Adrenal gland (tissue), 19 donors: ENCODE measurements at regions of chr11 and their contacts with region 1.

Region 1: DNA sequence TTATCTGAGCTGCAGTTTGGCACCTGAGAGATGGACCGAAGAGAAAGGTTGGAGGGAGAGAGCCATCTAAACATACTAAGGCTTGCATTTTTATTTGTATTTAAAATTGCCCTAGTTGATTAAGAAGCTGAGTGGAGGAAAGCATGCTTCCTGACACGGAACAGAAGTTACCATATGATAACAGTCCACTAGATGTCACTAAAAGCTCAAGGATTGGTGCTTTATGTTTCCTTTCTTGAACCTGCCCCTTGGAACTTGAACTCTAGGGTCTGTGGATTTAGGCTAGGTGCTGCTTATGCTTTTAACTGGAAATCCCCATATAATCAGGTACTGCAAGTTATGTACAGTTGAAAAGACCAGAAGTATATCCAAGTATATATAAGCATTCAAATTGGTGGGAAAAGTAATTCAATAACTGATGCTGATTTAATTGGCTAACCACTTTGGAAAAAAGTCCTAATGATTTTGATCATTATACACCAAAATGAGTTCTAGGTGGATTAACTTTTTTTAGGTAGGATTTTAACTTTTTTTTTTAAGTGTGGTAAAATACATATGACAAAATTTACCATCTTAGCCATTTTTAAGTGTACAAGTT is 9.5 kb downstream of the RBMXL2 start:
- DNase-seq: peak in 1 of 7 donors; percentile 2
- H3K4me3 ChIP-seq: no peak overlapping the region
- H3K27ac ChIP-seq: no peak overlapping the region
- H3K4me1 ChIP-seq: no peaks in the 10 kb centered on the region
- H3K27me3 ChIP-seq: no peaks in the 10 kb centered on the region
- CTCF ChIP-seq: peak; percentile 41 to 78 (median 74)
- POLR2A ChIP-seq: no peak

Region 2: DNA sequence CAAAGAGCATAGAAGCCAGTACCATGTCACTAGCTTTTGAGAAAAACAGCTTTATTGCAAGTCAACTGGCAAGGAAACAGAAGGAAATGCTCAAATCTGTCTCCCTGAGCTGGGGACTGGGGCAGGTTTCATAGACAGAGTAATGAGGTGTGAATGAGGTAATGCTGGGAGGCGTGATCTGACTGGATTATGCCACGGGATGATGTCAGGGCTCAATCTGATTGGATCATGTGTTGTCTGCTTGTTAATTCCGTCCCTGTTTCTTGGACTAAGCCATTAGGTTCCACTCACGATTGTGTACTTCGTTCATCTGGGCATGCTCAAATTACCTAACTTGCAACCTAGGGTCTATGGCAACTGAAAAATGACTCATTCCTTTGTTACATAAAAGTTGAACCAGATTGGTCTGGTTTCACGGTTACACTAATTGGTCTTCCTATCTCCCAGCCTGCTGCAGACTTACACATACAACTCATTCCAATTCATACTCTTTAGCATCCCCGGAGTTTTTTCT is 273.0 kb before region 1 on chr11:
- intact Hi-C with region 1: no loop called
- DNase-seq: no peak
- H3K4me3 ChIP-seq: no peak overlapping the region
- H3K27ac ChIP-seq: no peak overlapping the region
- H3K4me1 ChIP-seq: no peaks in the 10 kb centered on the region
- H3K27me3 ChIP-seq: no peaks in the 10 kb centered on the region
- CTCF ChIP-seq: no peak
- POLR2A ChIP-seq: no peak

Region 3: DNA sequence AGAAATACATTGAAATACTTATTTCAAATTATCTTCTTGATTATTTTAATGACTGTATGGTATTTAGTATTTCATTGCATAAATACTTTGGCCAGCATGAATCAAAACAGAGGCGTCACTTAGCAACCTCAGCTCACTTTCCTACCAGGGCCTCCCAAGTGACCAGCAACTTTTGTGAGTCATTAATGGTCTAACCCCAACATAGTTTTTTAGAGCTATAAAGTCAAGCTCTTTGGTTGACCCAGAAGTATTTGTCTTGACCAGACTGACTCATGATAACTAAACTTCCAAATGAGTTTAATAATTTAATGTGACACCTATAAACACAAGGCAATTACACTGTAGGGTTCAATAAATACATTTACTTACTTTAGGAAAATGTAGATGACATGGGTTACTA is 37.5 kb before region 1 on chr11:
- intact Hi-C with region 1: no loop called
- DNase-seq: no peak
- H3K4me3 ChIP-seq: no peak overlapping the region
- H3K27ac ChIP-seq: no peak overlapping the region
- H3K4me1 ChIP-seq: no peaks in the 10 kb centered on the region
- H3K27me3 ChIP-seq: no peaks in the 10 kb centered on the region
- CTCF ChIP-seq: no peak
- POLR2A ChIP-seq: no peak

Region 4: GRCh38 chr11:7690648-7691047 is 592.3 kb after region 1 on chr11:
- intact Hi-C with region 1: loop called in 1 of 2 experiments (anchors 5 kb)
- DNase-seq: no peak
- H3K4me3 ChIP-seq: no peak overlapping the region
- H3K27ac ChIP-seq: no peak overlapping the region
- H3K4me1 ChIP-seq: peaks cover 0 to 5% of the 10 kb centered on the region in 2 donors
- H3K27me3 ChIP-seq: peaks cover 6% of the 10 kb centered on the region
- CTCF ChIP-seq: no peak
- POLR2A ChIP-seq: no peak

Region 5: GRCh38 chr11:7793233-7793632 is 694.9 kb after region 1 on chr11:
- intact Hi-C with region 1: no loop called
- DNase-seq: no peak
- H3K4me3 ChIP-seq: no peak overlapping the region
- H3K27ac ChIP-seq: no peak overlapping the region
- H3K4me1 ChIP-seq: no peaks in the 10 kb centered on the region
- H3K27me3 ChIP-seq: no peaks in the 10 kb centered on the region
- CTCF ChIP-seq: no peak
- POLR2A ChIP-seq: no peak